ENCODE measurements at regions of chr6 and their contacts with region 1.

Region 1: DNA sequence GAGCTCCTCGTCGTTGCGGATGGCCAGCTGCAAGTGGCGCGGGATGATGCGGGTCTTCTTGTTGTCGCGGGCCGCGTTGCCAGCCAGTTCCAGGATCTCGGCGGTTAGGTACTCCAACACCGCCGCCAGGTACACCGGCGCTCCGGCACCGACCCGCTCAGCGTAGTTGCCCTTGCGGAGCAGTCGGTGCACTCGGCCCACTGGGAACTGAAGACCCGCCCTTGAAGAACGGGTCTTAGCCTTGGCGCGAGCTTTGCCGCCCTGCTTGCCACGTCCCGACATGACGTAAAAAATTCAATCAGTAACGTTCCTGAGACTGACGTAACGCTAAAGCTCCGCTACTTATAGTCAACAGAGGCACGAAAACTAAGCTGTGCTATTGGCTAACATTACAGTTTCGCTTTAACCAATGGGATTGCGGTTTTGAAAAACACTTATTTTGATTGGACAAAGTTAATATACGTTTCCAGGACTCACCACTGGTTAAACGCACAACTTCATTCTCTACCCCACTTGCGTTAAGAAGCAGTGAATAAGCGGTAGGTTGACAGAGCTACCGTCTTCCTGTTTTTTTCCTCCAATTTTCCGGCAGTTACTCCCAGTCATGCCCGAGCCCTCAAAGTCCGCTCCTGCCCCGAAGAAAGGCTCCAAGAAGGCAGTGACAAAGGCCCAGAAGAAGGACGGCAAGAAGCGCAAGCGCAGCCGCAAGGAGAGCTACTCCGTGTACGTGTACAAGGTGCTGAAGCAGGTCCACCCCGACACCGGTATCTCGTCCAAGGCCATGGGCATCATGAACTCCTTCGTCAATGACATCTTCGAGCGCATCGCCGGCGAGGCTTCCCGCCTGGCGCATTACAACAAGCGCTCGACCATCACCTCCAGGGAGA is 73.9 kb downstream of the OR2B2 start:
- DNase-seq: peak; percentile 84
- H3K4me3 ChIP-seq: peak overlapping the region; percentile 83 to 84
- H3K27ac ChIP-seq: peak overlapping the region; percentile 97 to 99
- H3K4me1 ChIP-seq: peaks cover 0 to 11% of the 10 kb centered on the region in 2 experiments; a peak in 2 of 4 replicates
- H3K27me3 ChIP-seq: no peaks in the 10 kb centered on the region
- CTCF ChIP-seq: no peak
- EP300 ChIP-seq: peak in 1 of 2 experiments; percentile 26; a peak in 1 of 4 replicates
- RAD21 ChIP-seq: no peak

Region 2: DNA sequence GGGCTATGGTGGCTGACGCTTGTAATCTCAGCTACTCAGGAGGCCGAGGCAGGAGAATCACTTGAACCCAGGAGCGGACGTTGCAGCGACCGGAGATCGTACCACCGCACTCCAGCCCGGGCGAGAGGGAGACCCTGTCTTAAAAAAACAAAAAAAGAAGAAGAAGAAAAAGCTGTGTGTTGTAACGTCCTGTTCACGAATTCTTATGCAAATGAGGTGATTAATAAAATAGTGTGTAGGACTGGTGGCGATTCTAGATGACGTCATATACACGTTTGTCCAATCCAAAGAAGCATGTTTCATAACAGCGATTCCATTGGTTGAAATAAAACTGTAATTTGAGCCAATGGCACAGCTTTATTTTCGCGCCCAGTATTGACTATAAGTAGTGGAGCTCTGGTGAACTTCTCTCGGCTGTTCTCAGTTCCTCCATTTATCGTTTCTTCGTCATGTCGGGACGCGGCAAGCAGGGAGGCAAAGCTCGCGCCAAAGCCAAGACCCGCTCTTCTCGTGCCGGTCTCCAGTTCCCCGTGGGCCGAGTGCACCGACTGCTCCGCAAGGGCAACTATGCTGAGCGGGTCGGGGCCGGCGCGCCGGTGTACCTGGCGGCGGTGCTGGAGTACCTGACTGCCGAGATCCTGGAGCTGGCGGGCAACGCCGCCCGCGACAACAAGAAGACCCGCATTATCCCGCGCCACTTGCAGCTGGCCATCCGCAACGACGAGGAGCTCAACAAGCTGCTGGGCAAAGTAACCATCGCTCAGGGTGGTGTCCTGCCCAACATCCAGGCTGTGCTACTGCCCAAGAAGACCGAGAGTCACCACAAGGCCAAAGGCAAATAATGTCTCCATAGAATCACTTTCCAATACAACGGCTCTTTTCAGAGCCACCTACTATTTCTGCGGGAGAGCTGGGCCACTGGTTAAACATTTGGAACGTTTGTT is 26.9 kb after region 1 on chr6:
- CTCF ChIA-PET with region 1: interaction called, 11 read pairs
- POLR2A ChIA-PET with region 1: interaction called, 578 read pairs
- DNase-seq: peak; percentile 85
- H3K4me3 ChIP-seq: peak overlapping the region; percentile 47 to 80
- H3K27ac ChIP-seq: peak overlapping the region; percentile 80 to 97
- H3K4me1 ChIP-seq: peaks cover 0 to 20% of the 10 kb centered on the region in 2 experiments; a peak in 2 of 4 replicates
- H3K27me3 ChIP-seq: no peaks in the 10 kb centered on the region
- CTCF ChIP-seq: no peak
- EP300 ChIP-seq: no peak; a peak in 1 of 4 replicates
- RAD21 ChIP-seq: no peak

Region 3: DNA sequence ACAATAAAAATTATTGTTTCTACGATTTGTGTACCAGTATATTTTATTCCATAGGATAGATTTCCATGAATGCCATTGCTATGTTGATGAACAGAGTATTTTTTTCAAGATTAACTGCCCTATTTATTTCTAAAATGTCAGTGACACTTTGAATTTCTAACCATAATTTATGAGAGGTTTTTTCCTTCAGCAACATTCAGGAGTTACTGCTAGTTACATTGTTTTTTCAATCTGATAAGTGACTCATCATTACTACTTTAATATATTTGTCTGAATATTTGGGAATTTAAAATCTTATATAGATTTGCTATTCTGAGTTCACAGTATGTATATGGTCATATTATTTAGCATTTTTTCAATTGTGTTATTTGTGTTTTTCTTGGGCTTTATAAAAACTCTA is 112.7 kb after region 1 on chr6:
- CTCF ChIA-PET with region 1: no interaction called
- POLR2A ChIA-PET with region 1: no interaction called
- DNase-seq: no peak
- H3K4me3 ChIP-seq: no peak overlapping the region
- H3K27ac ChIP-seq: no peak overlapping the region
- H3K4me1 ChIP-seq: no peaks in the 10 kb centered on the region
- H3K27me3 ChIP-seq: 0 out of 2 replicates have a peak, but pooled peaks cover 5% of the 10 kb centered on the region
- CTCF ChIP-seq: no peak
- EP300 ChIP-seq: no peak
- RAD21 ChIP-seq: no peak

Region 4: GRCh38 chr6:28068067-28068466 is 229.8 kb after region 1 on chr6:
- CTCF ChIA-PET with region 1: no interaction called
- POLR2A ChIA-PET with region 1: no interaction called
- DNase-seq: no peak
- H3K4me3 ChIP-seq: no peak overlapping the region
- H3K27ac ChIP-seq: no peak overlapping the region
- H3K4me1 ChIP-seq: no peaks in the 10 kb centered on the region
- H3K27me3 ChIP-seq: peaks cover 5% of the 10 kb centered on the region; the same call in 1 of the 2 replicates
- CTCF ChIP-seq: no peak
- EP300 ChIP-seq: no peak
- RAD21 ChIP-seq: no peak